Posterior cingulate gyrus (tissue), 11 donors: ENCODE measurements at regions of chr2 and their contacts with region 1.

Region 1: DNA sequence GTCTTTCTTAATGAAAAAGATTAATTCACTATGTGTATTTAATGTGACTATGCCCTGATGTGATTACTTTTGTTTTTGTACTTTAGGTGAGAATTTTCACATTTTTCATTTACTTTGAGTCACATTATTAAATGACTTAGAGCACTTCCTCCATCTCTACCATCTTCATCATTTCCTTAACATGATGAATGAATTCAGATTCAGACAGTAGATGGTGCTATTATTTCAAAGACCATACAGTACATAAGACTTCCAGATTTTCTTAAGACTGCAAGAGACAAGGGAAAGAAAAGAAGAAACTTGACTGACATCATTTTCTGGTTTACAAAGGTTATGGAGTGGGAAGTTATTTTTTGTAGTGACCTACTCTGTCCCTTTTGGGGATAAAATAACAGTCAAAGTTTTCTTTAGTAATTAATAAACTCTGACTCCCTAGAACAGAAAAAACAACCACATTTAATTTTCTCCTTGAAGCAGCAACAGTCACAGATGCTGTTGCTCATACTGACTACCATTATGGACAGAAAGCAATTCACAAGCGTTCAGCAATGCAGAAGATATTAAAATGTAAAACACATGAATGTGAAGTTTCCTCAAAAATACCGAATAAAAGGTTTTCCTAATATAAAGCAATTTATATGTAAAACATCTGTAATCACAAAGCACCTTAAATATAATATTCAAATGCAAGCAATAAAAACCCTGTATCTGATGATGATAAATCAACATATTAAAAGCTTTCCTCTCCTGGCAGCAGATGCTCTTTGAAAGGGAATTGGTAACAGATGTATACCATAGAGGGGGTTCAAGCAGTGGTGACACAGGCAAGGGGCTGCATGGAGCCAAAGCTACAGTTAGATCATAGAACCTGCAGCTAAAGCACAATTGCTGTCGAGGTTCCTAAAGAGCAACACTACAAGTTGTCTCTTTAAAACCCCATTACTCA is 1010.9 kb upstream of the NXPH2 start:
- DNase-seq: no peak

Region 2: DNA sequence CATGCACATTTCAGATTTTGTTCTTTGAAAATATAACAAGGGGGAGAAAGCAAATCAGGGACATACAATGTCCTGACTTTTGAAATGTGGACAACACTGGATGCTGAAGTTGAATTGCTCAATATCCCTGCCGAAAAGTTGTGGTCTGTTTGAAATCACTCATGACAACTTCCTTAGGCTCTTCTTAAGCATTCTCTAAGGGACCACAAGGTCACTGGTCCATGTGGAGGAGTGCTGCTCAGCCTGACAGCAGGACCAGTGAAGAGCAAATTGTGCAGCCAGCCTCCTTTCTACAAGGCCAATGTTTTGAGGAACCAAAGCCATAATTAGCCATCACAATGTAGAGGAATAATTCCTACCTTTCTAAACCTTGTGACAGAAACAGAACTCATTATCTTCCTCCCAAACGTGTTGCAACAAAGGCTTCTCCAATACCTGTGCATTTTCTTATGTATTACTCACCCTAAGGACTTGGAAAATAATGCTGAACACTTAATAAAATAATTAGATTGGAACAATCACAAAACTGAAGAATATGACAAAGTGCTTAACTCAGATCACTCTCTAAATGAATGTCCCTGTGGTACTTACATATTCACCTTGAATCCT is 466.7 kb after region 1 on chr2:
- intact Hi-C with region 1: no loop called
- DNase-seq: no peak

Region 3: DNA sequence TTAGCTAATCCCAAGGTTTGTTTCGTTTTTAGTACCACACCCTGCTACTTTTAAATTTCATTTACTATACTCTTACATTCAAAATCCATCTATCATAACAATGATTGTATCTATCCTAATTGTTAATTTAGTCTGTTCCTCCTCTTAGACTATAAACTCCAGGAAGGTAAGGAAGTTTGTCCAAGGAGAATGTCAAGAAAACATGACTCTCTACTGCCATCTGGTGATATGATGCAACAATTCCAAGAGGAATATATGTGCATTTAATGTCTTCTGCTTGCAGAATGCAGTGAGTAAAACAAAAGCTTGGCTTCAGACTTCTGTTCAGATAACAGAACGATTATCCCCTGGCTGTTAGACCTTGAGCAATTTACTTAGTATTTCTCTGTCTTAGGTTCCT is 1072.6 kb after region 1 on chr2:
- intact Hi-C with region 1: loop called (anchors 5 kb)
- DNase-seq: no peak